RWPE1 (cell line): ENCODE measurements at regions of chr1 and their contacts with region 1.

Region 1: GRCh38 chr1:206544562-206545257 is 37.4 kb downstream of the RASSF5 start:
- DNase-seq: peak; percentile 89
- H3K27ac ChIP-seq: no peak overlapping the region
- CTCF ChIP-seq: peak; percentile 93

Region 2: DNA sequence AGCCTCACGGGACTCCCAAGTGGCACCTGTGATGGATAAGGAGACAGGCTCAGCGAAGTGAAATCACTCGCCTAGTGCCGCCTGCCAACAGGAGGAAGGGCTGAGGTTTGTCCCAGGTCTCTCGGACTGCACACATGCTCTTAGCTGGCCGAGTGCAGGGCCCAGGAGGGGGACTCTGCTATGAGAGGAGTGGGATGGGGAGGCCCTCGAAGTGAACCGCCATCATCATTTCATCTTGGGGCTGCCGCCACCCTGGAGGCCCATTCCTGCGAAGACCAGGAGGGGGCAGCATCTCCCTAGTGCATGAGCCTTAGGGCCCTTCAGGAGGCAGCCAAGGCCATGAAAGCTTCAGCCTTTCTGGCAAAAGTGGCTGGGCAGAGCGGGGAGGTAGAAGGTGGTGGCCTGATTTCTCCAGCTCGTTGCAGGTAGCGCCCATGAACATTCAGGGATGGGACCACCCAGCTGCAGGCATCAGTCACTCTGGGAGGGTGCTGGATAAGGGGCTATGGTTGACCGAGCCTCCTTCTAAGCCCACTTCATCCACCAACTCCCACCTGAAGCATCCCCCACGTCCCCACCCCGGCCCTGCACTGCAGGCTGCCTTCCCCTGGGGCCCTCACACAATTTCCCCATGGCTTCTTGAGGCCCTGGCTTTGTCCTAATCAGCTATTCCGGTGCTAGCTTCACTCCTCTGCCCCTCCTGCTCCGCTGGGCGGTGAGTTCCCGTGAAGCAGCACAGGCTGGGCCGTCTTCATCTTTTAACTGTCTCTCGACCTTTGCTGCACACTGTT is 54.5 kb before region 1 on chr1:
- CTCF ChIA-PET with region 1: interaction called, 15 read pairs
- POLR2A ChIA-PET with region 1: interaction called, 6 read pairs
- DNase-seq: peak; percentile 93
- H3K27ac ChIP-seq: no peak overlapping the region
- CTCF ChIP-seq: peak; percentile 95

Region 3: GRCh38 chr1:206521143-206521542 is 23.6 kb before region 1 on chr1:
- CTCF ChIA-PET with region 1: interaction called, 16 read pairs
- POLR2A ChIA-PET with region 1: no interaction called
- DNase-seq: no peak
- H3K27ac ChIP-seq: peak overlapping the region; percentile 37; the same call in 1 of the 2 replicates
- CTCF ChIP-seq: no peak

Region 4: GRCh38 chr1:206529425-206529824 is 15.3 kb before region 1 on chr1:
- CTCF ChIA-PET with region 1: interaction called, 14 read pairs
- POLR2A ChIA-PET with region 1: interaction called, 4 read pairs
- DNase-seq: no peak
- H3K27ac ChIP-seq: no peak overlapping the region
- CTCF ChIP-seq: no peak

Region 5: DNA sequence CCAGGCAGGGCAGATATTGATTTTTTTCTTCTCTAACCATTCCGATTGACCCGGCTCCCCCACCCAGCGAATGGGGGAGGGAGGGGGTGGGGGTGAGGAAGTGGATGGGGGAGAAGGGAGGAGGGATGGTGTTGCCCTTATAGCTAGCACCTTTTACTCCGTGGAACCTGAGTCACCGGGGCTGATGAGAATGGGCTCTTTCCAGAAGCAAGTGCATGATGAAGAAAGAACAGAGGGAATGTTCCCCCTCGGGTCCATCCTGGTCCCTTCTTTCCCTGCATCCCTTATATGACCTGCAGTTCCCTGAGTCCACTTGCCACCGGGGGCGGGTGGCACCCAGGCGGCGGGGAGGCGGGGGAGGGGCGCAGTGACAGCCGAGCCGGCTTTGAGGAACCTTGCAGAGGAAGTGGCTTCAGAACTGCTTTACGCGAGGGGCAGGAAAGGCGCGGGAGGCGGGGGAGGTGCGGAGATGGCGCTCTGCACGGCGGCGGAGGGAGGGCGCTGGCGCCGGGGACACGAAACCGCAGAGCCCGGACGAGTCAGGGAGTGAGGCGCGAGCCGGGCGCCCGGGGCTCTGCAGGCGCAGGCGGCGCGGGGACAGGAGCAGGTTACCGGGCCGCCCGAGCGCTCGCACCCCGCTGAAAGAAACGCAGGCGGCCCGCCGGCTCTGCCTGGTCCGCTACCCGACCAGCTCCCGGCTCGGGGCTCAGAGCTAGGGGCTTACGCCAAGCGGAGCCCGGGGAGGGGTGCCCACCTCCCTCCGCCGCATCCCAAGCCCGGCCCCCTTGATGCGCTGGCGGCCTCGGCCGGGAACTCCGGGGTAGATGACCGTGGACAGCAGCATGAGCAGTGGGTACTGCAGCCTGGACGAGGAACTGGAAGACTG is 12.3 kb after region 1 on chr1:
- CTCF ChIA-PET with region 1: interaction called, 51 read pairs
- POLR2A ChIA-PET with region 1: no interaction called
- DNase-seq: peak; percentile 58
- H3K27ac ChIP-seq: peak overlapping the region; percentile 19
- CTCF ChIP-seq: no peak

Region 6: GRCh38 chr1:206563367-206564207 is 18.9 kb after region 1 on chr1:
- CTCF ChIA-PET with region 1: interaction called, 17 read pairs
- POLR2A ChIA-PET with region 1: no interaction called
- DNase-seq: no peak
- H3K27ac ChIP-seq: no peak overlapping the region
- CTCF ChIP-seq: no peak

Region 7: DNA sequence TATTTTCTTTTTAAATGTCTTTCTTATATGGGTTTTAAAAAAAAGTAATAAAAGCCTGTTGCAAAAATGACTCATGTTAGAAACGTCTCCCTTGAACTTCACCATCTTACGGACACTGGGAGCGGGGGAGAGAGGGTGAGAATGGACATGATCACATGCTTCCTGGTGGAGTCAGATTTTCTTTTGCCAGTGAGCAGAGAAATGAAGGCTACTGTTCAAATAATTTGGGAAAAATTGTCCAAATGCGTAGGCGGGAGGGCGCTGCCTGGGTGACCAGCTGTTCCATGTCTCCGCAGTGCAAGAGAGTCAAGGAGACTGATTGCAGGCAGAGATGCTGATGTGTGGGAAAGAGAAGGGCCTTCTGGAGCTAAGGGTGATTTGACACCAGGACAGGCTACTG is 44.5 kb after region 1 on chr1:
- CTCF ChIA-PET with region 1: interaction called, 19 read pairs
- POLR2A ChIA-PET with region 1: interaction called, 4 read pairs
- DNase-seq: peak; percentile 94
- H3K27ac ChIP-seq: peak overlapping the region; percentile 60
- CTCF ChIP-seq: no peak